ENCODE measurements at regions of chr3 and their contacts with region 1.

Region 1: DNA sequence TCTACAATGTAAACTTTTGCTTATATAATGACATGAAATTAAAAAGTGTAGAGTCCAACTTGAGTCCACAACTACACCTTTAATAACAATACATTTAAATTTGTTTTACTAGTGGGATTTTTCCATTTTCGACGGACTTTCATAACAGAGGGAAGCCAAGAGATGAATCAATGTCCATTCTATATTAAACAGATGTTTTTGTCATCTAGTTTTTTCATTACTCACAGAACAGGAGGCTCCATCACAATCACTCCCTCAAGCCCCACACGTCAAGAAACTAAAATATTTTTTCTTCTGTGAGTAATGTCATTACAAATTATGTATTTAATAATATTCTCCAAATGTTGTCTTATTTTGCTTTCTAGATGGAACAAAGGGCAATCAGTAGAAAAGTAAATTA is 932.9 kb downstream of the ROBO1 start:
- H3K4me3 Mint-ChIP-seq: no peak overlapping the region
- H3K27ac Mint-ChIP-seq: no peak overlapping the region
- H3K4me1 Mint-ChIP-seq: no peaks in the 10 kb centered on the region
- H3K27me3 Mint-ChIP-seq: no peaks in the 10 kb centered on the region

Region 2: DNA sequence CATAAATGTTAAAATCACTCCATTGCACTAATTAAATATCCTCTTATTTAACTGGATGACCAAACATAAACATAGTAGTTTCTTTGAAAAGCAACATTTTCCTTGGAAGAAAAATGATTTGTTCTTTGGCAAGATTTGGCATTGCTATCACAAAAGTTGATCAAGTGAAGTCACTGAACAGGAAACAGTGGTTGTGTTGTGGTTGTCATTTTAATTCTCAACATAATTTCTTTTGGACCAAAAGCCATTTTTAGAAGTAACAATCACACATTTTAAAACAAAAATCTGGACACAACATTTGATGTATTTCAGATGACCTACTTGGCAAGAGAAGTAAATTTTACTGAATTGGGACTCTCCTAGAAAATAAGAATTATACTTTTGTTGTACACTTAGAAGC is 60.6 kb after region 1 on chr3:
- intact Hi-C with region 1: loop called (anchors 2 kb)
- H3K4me3 Mint-ChIP-seq: no peak overlapping the region
- H3K27ac Mint-ChIP-seq: no peak overlapping the region
- H3K4me1 Mint-ChIP-seq: no peaks in the 10 kb centered on the region
- H3K27me3 Mint-ChIP-seq: no peaks in the 10 kb centered on the region

Measured in dendritic cell treated with granulocyte-macrophage colony-stimulating factor and Interleukin-4, amounts not matched to agents 40 ng/mL and 50 ng/mL, for 4 days (primary cell).